CD8-positive, alpha-beta T cell (primary cell): ENCODE measurements at regions of chrX and their contacts with region 1.

Region 1: DNA sequence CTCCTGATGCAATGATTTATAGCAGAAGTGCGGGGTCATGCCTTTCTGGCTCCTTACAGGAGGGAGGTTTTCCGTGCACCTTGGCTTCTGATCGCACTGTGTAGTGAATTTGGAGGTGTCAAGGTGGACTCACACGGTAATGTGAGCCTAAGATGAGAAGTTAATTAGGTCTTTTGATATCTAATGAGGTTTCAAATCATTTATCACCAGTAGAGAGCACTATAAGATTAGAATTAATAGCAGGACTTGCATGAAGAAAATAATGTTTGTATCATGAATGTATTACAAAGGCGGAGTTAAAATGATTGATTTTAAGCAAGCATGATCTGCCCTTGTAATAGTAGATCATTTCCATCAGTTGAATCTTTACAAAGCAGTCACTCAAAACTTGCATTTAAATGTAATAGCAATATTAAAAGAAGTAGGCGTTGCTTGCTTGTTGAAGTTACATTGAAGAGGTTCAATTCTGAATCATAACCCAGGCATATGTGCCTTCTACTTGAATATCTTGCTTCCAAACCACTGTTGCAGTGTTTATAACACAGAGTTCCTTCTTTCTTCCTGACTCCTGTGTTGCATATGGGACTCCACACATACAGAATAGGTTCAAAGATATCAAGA is 152.1 kb downstream of the FMR1NB start:
- DNase-seq: peak in 2 of 9 experiments; percentile 17 to 38
- ATAC-seq: no peak
- H3K4me3 ChIP-seq: no peak overlapping the region
- H3K4me3 Mint-ChIP-seq: no peak overlapping the region
- H3K27ac ChIP-seq: no peak overlapping the region
- H3K27ac Mint-ChIP-seq: no peak overlapping the region
- H3K4me1 ChIP-seq: no peaks in the 10 kb centered on the region
- H3K4me1 Mint-ChIP-seq: no peaks in the 10 kb centered on the region
- H3K27me3 ChIP-seq: no peaks in the 10 kb centered on the region
- H3K27me3 Mint-ChIP-seq: no peaks in the 10 kb centered on the region
- CTCF ChIP-seq: peak; percentile 47

Region 2: DNA sequence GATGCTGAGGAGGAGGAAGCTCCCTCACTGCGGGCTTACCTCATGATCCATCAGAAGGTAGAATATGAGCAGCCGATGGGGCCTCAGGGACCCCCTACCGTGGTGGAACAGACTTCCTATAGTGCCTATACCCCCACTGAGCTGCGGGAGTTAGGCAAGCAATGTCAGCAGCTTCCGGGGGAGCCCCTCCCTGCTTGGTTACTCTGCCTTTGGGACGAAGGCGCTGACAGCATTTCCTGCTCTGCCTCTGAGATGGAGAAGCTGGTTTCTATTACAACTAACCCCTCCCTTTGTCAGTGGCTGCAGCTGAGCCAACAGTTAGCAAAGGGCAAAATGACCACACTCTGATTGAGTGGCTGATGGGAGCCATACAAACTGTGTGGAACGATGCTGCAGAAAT is 941.2 kb after region 1 on chrX:
- CTCF ChIA-PET with region 1: no interaction called
- POLR2A ChIA-PET with region 1: no interaction called
- intact Hi-C with region 1: loop called in 1 of 2 experiments (anchors 10 kb)
- DNase-seq: peak in 2 of 9 experiments; percentile 9 to 16
- ATAC-seq: no peak
- H3K4me3 ChIP-seq: no peak overlapping the region
- H3K4me3 Mint-ChIP-seq: peak overlapping the region; percentile 29
- H3K27ac ChIP-seq: no peak overlapping the region
- H3K27ac Mint-ChIP-seq: no peak overlapping the region
- H3K4me1 ChIP-seq: no peaks in the 10 kb centered on the region
- H3K4me1 Mint-ChIP-seq: peaks cover 3% of the 10 kb centered on the region
- H3K27me3 ChIP-seq: no peaks in the 10 kb centered on the region
- H3K27me3 Mint-ChIP-seq: no peaks in the 10 kb centered on the region
- CTCF ChIP-seq: no peak

Region 3: GRCh38 chrX:149456476-149457245 is 1323.4 kb after region 1 on chrX:
- CTCF ChIA-PET with region 1: no interaction called
- POLR2A ChIA-PET with region 1: no interaction called
- intact Hi-C with region 1: loop called in 1 of 2 experiments (anchors 5 kb)
- DNase-seq: no peak
- ATAC-seq: no peak
- H3K4me3 ChIP-seq: no peak overlapping the region
- H3K4me3 Mint-ChIP-seq: no peak overlapping the region
- H3K27ac ChIP-seq: no peak overlapping the region
- H3K27ac Mint-ChIP-seq: no peak overlapping the region
- H3K4me1 ChIP-seq: no peaks in the 10 kb centered on the region
- H3K4me1 Mint-ChIP-seq: no peaks in the 10 kb centered on the region
- H3K27me3 ChIP-seq: no peaks in the 10 kb centered on the region
- H3K27me3 Mint-ChIP-seq: peaks cover 4% of the 10 kb centered on the region
- CTCF ChIP-seq: no peak

Region 4: DNA sequence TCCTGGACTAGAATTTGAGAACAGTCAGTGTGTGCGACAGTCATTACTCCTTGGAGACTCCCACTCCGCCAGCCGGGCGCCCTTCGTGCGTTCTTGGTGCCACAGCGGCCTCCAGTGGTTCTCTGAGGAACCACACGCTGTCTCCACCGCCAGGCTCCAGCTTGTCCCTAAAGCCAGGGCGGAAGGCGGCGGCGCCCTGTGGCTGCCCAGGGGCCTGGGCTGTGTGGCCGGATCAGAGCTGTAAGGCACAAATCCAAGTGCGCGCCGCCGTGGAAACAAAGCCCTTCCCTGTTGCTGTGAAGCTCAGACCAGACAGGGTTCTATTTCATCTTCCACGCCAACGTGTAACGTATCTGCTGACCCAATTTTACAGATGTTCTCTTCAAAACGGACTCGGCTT is 1337.7 kb after region 1 on chrX:
- CTCF ChIA-PET with region 1: interaction called, 4 read pairs
- POLR2A ChIA-PET with region 1: no interaction called
- intact Hi-C with region 1: loop called in 1 of 2 experiments (anchors 2 kb)
- DNase-seq: peak in 8 of 9 experiments; percentile 30 to 71 (median 62)
- ATAC-seq: peak; percentile 80
- H3K4me3 ChIP-seq: no peak overlapping the region
- H3K4me3 Mint-ChIP-seq: no peak overlapping the region
- H3K27ac ChIP-seq: no peak overlapping the region
- H3K27ac Mint-ChIP-seq: no peak overlapping the region
- H3K4me1 ChIP-seq: no peaks in the 10 kb centered on the region
- H3K4me1 Mint-ChIP-seq: peaks cover 3% of the 10 kb centered on the region
- H3K27me3 ChIP-seq: no peaks in the 10 kb centered on the region
- H3K27me3 Mint-ChIP-seq: peaks cover under 1% of the 10 kb centered on the region
- CTCF ChIP-seq: peak; percentile 73